CD4-positive, alpha-beta T cell (primary cell): ENCODE measurements at regions of chr11 and their contacts with region 1.

Region 1: GRCh38 chr11:9573052-9573774 is at the start of gene WEE1:
- DNase-seq: peak; percentile 85 to 98 (median 94)
- ATAC-seq: peak; percentile 89
- H3K4me3 ChIP-seq: peak within 1 kb of the TSS; percentile 96
- H3K4me3 Mint-ChIP-seq: peak within 1 kb of the TSS; percentile 90
- H3K27ac ChIP-seq: peak within 1 kb of the TSS in 1 of 2 donors; percentile 69
- H3K27ac Mint-ChIP-seq: peak within 1 kb of the TSS; percentile 64
- H3K4me1 ChIP-seq: peaks cover 32% of the 10 kb centered on the region
- H3K4me1 Mint-ChIP-seq: peaks cover 46% of the 10 kb centered on the region
- H3K27me3 ChIP-seq: no peaks in the 10 kb centered on the region
- H3K27me3 Mint-ChIP-seq: peaks cover 15% of the 10 kb centered on the region
- CTCF ChIP-seq: no peak
- total RNA-seq, gene WEE1: 9.3 to 10.7 TPM

Region 2: DNA sequence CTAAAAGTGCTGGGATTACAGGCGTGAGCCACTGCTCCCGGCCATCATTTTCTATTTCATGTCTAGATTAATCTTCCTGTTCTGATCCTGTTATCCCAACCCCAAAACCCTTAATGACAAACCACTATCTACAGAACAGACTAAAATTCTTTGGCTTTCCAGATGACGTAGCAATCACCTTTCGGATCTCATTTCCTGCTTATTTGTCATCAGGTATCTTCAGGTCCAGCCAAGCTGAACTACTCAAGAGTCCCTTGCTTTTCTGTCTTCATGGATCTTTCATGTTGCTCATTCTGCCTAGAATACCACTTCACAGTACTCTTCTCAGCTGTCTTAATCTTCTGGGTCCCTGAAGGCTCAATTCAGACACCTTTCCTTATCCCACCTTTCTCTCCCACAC is 216.2 kb before region 1 on chr11:
- CTCF ChIA-PET with region 1: no interaction called
- POLR2A ChIA-PET with region 1: no interaction called
- intact Hi-C with region 1: no loop called
- DNase-seq: no peak
- ATAC-seq: no peak
- H3K4me3 ChIP-seq: no peak overlapping the region
- H3K4me3 Mint-ChIP-seq: no peak overlapping the region
- H3K27ac ChIP-seq: no peak overlapping the region
- H3K27ac Mint-ChIP-seq: no peak overlapping the region
- H3K4me1 ChIP-seq: no peaks in the 10 kb centered on the region
- H3K4me1 Mint-ChIP-seq: no peaks in the 10 kb centered on the region
- H3K27me3 ChIP-seq: no peaks in the 10 kb centered on the region
- H3K27me3 Mint-ChIP-seq: no peaks in the 10 kb centered on the region
- CTCF ChIP-seq: no peak

Region 3: GRCh38 chr11:9590717-9591116 is 17.5 kb after region 1 on chr11:
- CTCF ChIA-PET with region 1: no interaction called
- POLR2A ChIA-PET with region 1: interaction called, 12 read pairs
- intact Hi-C with region 1: no loop called
- DNase-seq: no peak
- ATAC-seq: no peak
- H3K4me3 ChIP-seq: no peak overlapping the region
- H3K4me3 Mint-ChIP-seq: no peak overlapping the region
- H3K27ac ChIP-seq: no peak overlapping the region
- H3K27ac Mint-ChIP-seq: no peak overlapping the region
- H3K4me1 ChIP-seq: no peaks in the 10 kb centered on the region
- H3K4me1 Mint-ChIP-seq: no peaks in the 10 kb centered on the region
- H3K27me3 ChIP-seq: no peaks in the 10 kb centered on the region
- H3K27me3 Mint-ChIP-seq: no peaks in the 10 kb centered on the region
- CTCF ChIP-seq: no peak

Region 4: GRCh38 chr11:9601037-9601875 is 28.0 kb after region 1 on chr11:
- CTCF ChIA-PET with region 1: interaction called, 3 read pairs
- POLR2A ChIA-PET with region 1: interaction called, 18 read pairs
- intact Hi-C with region 1: no loop called
- DNase-seq: peak; percentile 7 to 87 (median 32)
- ATAC-seq: peak; percentile 85
- H3K4me3 ChIP-seq: peak overlapping the region; percentile 36
- H3K4me3 Mint-ChIP-seq: peak overlapping the region; percentile 51
- H3K27ac ChIP-seq: peak overlapping the region; percentile 24 to 51
- H3K27ac Mint-ChIP-seq: peak overlapping the region; percentile 87
- H3K4me1 ChIP-seq: peaks cover 21% of the 10 kb centered on the region
- H3K4me1 Mint-ChIP-seq: peaks cover 16% of the 10 kb centered on the region
- H3K27me3 ChIP-seq: no peaks in the 10 kb centered on the region
- H3K27me3 Mint-ChIP-seq: no peaks in the 10 kb centered on the region
- CTCF ChIP-seq: no peak